HepG2 (cell line): ENCODE measurements at regions of chr11 and their contacts with region 1.

Region 1: GRCh38 chr11:62787005-62787759 is at the start of gene TMEM179B:
- DNase-seq: peak; percentile 96
- ATAC-seq: peak; percentile 77
- H3K4me3 ChIP-seq: peak within 1 kb of the TSS; percentile 65 to 88 (median 81)
- H3K27ac ChIP-seq: peak within 1 kb of the TSS; percentile 79
- H3K4me1 ChIP-seq: peaks cover 45% of the 10 kb centered on the region
- H3K27me3 ChIP-seq: no peaks in the 10 kb centered on the region; a peak in 1 of 5 replicates
- CTCF ChIP-seq: peak; percentile 79
- EP300 ChIP-seq: no peak; a peak in 1 of 4 replicates
- POLR2A ChIP-seq: peak; percentile 91 to 98
- RAD21 ChIP-seq: no peak
- total RNA-seq, gene TMEM179B: 11.4 and 24.8 TPM in 2 replicates

Region 2: GRCh38 chr11:62732801-62733200 is 54.4 kb before region 1 on chr11:
- CTCF ChIA-PET with region 1: interaction called, 13 read pairs
- POLR2A ChIA-PET with region 1: interaction called, 22 read pairs
- in situ Hi-C with region 1: no loop called
- intact Hi-C with region 1: loop called (anchors 2 kb)
- DNase-seq: peak; percentile 43
- ATAC-seq: no peak
- H3K4me3 ChIP-seq: no peak overlapping the region
- H3K27ac ChIP-seq: no peak overlapping the region
- H3K4me1 ChIP-seq: peaks cover 18% of the 10 kb centered on the region
- H3K27me3 ChIP-seq: peaks cover 0 to 3% of the 10 kb centered on the region in 2 experiments; a peak in 1 of 5 replicates
- CTCF ChIP-seq: peak; percentile 33
- EP300 ChIP-seq: no peak
- POLR2A ChIP-seq: no peak
- RAD21 ChIP-seq: no peak

Region 3: GRCh38 chr11:62771144-62772021 is 15.8 kb before region 1 on chr11 and contains the start of gene TAF6L:
- CTCF ChIA-PET with region 1: no interaction called
- POLR2A ChIA-PET with region 1: interaction called, 27 read pairs
- in situ Hi-C with region 1: no loop called
- intact Hi-C with region 1: no loop called
- DNase-seq: peak; percentile 97
- ATAC-seq: peak; percentile 93
- H3K4me3 ChIP-seq: peak within 1 kb of the TSS; percentile 64 to 78 (median 65)
- H3K27ac ChIP-seq: peak within 1 kb of the TSS; percentile 92
- H3K4me1 ChIP-seq: peaks cover 23% of the 10 kb centered on the region
- H3K27me3 ChIP-seq: no peaks in the 10 kb centered on the region; a peak in 1 of 5 replicates
- CTCF ChIP-seq: 0 out of 2 replicates have a peak, but pooled peaks have one; percentile 8
- EP300 ChIP-seq: no peak
- POLR2A ChIP-seq: peak; percentile 60 to 88; a peak in 3 of 4 replicates
- RAD21 ChIP-seq: no peak; the same call in 1 of the 2 replicates
- total RNA-seq, gene TAF6L: 13.4 and 19.4 TPM in 2 replicates

Region 4: GRCh38 chr11:62811659-62812058 is 24.5 kb after region 1 on chr11:
- CTCF ChIA-PET with region 1: no interaction called
- POLR2A ChIA-PET with region 1: interaction called, 11 read pairs
- in situ Hi-C with region 1: no loop called
- intact Hi-C with region 1: no loop called
- DNase-seq: peak; percentile 50
- ATAC-seq: peak; percentile 89
- H3K4me3 ChIP-seq: no peak overlapping the region
- H3K27ac ChIP-seq: no peak overlapping the region
- H3K4me1 ChIP-seq: peaks cover 18% of the 10 kb centered on the region
- H3K27me3 ChIP-seq: no peaks in the 10 kb centered on the region
- CTCF ChIP-seq: no peak
- EP300 ChIP-seq: no peak
- POLR2A ChIP-seq: no peak
- RAD21 ChIP-seq: no peak

Region 5: DNA sequence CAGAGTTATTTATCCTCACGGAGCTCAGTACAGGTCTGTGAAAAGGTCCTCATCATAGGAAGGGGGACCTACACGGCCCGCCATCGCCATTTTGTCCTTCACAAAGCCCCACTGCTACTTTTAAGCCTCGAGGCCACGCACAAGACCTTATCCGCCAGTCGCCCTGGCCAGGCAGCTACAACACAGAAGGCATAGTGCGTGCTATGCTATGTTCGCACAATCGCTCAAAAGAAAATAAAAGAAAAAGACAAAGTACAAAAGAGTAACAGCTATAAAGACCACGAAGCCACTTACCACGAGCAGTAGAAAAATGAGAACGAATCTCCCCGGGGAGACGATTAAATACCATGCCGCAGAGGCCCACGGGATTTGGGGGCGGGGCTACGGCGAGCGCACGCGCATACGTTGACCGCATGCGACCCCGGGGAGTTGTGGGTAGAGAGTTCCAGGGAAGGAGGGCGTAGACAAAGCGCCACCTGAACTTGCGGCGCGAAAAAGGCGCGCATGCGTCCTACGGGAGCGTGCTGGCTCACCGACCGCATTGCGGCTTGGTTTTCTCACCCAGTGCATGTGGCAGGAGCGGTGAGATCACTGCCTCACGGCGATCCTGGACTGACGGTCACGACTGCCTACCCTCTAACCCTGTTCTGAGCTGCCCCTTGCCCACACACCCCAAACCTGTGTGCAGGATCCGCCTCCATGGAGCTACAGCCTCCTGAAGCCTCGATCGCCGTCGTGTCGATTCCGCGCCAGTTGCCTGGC is 68.6 kb after region 1 on chr11:
- CTCF ChIA-PET with region 1: interaction called, 25 read pairs
- POLR2A ChIA-PET with region 1: interaction called, 68 read pairs
- in situ Hi-C with region 1: no loop called
- intact Hi-C with region 1: no loop called
- DNase-seq: peak; percentile 97
- ATAC-seq: peak; percentile 79
- H3K4me3 ChIP-seq: peak overlapping the region; percentile 86 to 96 (median 94)
- H3K27ac ChIP-seq: peak overlapping the region; percentile 91
- H3K4me1 ChIP-seq: peaks cover 77% of the 10 kb centered on the region
- H3K27me3 ChIP-seq: no peaks in the 10 kb centered on the region; a peak in 1 of 5 replicates
- CTCF ChIP-seq: peak; percentile 23; the same call in 1 of the 2 replicates
- EP300 ChIP-seq: 0 out of 4 replicates have a peak, but pooled peaks of 1 of the 2 experiments have one; percentile 8
- POLR2A ChIP-seq: peak; percentile 99 to 100
- RAD21 ChIP-seq: peak; percentile 16; the same call in 1 of the 2 replicates

Region 6: GRCh38 chr11:62880803-62881578 is 93.8 kb after region 1 on chr11 and contains the start of gene SLC3A2:
- CTCF ChIA-PET with region 1: no interaction called
- POLR2A ChIA-PET with region 1: interaction called, 7 read pairs
- in situ Hi-C with region 1: loop called (anchors 5 kb)
- intact Hi-C with region 1: loop called (anchors 2 kb)
- DNase-seq: peak; percentile 74
- ATAC-seq: peak; percentile 91
- H3K4me3 ChIP-seq: peak within 1 kb of the TSS; percentile 92 to 99 (median 94)
- H3K27ac ChIP-seq: peak within 1 kb of the TSS; percentile 93
- H3K4me1 ChIP-seq: peaks cover 56% of the 10 kb centered on the region
- H3K27me3 ChIP-seq: no peaks in the 10 kb centered on the region; a peak in 1 of 5 replicates
- CTCF ChIP-seq: peak; percentile 94
- EP300 ChIP-seq: no peak
- POLR2A ChIP-seq: peak; percentile 96 to 98
- RAD21 ChIP-seq: peak; percentile 84
- total RNA-seq, gene SLC3A2: 94.8 and 213 TPM in 2 replicates